Activated T-helper 2 cell treated with anti-CD3 and anti-CD28 coated beads, Interferon-gamma antibody, Interleukin-2, Interleukin-4, amounts not matched to agents 10 μg/mL and 5 μg/mL and 100 μg/mL, durations not matched to agents 14 hours and 24 hours and 36 hours (primary cell): ENCODE measurements at regions of chr10 and their contacts with region 1.

Region 1: DNA sequence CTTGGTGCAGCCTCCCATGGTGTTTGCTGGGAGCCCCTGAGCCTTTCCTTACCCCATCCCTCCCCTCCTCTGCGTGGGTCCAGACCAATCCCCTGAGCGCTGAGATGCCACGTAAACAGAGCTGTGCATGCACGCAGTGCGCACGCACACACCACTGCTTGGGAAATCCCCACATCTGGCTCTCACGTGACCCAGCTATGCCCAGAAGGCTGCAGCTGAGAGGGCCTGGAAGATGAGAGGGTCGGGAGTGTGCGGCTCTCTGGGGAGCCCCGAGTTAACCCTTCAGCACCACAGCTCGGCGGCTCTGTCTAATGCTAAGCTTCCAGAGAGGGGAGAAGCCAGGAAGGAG is 177.2 kb downstream of the SH3PXD2A start:
- DNase-seq: peak; percentile 84
- H3K4me3 Mint-ChIP-seq: peak overlapping the region; percentile 78
- H3K27ac Mint-ChIP-seq: peak overlapping the region; percentile 87
- H3K4me1 Mint-ChIP-seq: peaks cover 22% of the 10 kb centered on the region
- H3K27me3 Mint-ChIP-seq: no peaks in the 10 kb centered on the region

Region 2: DNA sequence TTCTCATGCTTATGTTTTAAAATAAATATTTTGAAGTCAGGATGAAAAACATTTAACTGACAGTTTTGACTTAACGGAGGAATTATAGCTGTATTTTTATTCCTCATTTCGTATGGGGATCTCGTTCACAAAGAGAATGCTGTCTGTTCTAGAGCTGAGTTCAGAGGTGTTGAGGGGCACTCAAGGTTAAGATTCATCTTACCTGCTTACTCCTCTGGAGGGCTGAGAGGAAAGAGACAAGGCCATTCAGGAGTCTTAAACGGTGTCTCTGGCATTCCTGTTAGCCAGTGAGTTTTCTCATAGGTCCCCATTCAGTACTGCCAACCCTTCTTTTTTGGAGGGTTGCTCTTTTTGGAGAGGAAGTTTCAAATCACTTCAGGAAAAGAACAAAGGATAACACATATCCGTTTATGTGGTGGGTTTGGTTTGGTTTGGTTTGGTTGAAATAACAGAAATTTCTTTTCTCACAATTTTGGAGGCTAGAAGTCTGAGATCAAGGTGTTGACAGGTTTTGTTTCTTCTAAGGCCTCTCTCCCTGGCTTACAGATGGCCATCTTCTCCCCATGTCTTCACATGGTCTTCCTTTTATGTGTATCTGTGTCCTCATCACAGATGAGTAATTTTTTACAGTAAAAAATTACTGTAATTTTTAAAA is 249.0 kb before region 1 on chr10:
- intact Hi-C with region 1: no loop called
- DNase-seq: no peak
- H3K4me3 Mint-ChIP-seq: no peak overlapping the region
- H3K27ac Mint-ChIP-seq: peak overlapping the region; percentile 66
- H3K4me1 Mint-ChIP-seq: peaks cover 43% of the 10 kb centered on the region
- H3K27me3 Mint-ChIP-seq: no peaks in the 10 kb centered on the region

Region 3: GRCh38 chr10:103659674-103660363 is 18.3 kb before region 1 on chr10:
- intact Hi-C with region 1: loop called (anchors 2 kb)
- DNase-seq: peak; percentile 65
- H3K4me3 Mint-ChIP-seq: peak overlapping the region; percentile 83
- H3K27ac Mint-ChIP-seq: peak overlapping the region; percentile 80
- H3K4me1 Mint-ChIP-seq: peaks cover 8% of the 10 kb centered on the region
- H3K27me3 Mint-ChIP-seq: no peaks in the 10 kb centered on the region